Posterior vena cava (tissue), 2 donors: ENCODE measurements at regions of chr16 and their contacts with region 1.

Region 1: DNA sequence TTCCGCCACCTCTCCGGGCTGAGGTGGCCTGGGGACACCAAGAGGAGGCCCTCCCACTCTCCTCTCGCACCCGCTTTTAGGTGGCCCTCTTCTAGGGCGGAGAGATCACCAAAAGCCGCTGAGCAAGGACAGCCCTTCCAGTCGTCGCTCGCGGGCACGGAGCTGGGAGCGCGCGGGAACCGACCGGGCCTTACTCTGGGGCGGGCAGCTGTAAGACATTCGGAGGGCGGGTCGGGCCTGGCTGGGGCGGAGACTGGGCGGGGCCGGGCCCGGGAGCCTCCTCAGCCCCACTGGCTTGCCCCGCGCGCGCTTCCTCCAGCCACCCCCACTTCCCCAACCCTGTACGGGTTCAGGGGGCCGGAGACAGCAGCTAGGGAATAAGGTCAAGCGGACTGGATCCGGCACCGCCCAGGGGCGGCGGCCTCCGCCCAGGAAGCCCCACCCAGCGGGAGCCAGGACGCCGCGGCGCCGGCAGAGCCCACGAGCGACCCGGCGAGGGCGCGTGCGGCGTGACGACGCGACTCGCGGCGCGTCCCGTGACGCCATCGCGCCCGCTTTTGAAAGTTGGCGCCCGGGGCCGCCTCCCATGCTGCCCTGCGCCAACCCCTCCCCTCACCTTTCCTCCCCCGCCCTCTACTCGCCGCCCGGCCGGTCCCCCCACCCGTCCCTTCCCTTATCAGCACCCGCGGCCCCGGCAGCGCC is 351 bp upstream of the CTCF start:
- DNase-seq: peak; percentile 99

Region 2: GRCh38 chr16:67548273-67549126 is 13.5 kb before region 1 on chr16:
- intact Hi-C with region 1: loop called in 1 of 2 experiments (anchors 1 kb)
- DNase-seq: peak; percentile 62

Region 3: GRCh38 chr16:67667817-67668494 is 106.0 kb after region 1 on chr16:
- intact Hi-C with region 1: loop called (anchors 5 to 10 kb)
- DNase-seq: peak; percentile 94